ENCODE measurements at regions of chr17 and their contacts with region 1.

Region 1: GRCh38 chr17:18183334-18184142 is at the start of gene ALKBH5:
- DNase-seq: peak; percentile 97
- ATAC-seq: peak; percentile 88
- H3K4me3 ChIP-seq: peak within 1 kb of the TSS; percentile 83
- H3K27ac ChIP-seq: peak within 1 kb of the TSS; percentile 97
- H3K4me1 ChIP-seq: peaks cover 11% of the 10 kb centered on the region
- H3K27me3 ChIP-seq: no peaks in the 10 kb centered on the region
- CTCF ChIP-seq: peak; percentile 35 to 54 (median 45); a peak in 5 of 6 replicates
- EP300 ChIP-seq: no peak
- POLR2A ChIP-seq: peak; percentile 77
- RAD21 ChIP-seq: no peak
- polyA plus RNA-seq, gene ALKBH5: 13.7 to 31.8 TPM

Region 2: GRCh38 chr17:18141210-18141803 is 42.2 kb before region 1 on chr17:
- CTCF ChIA-PET with region 1: interaction called, 43 read pairs
- POLR2A ChIA-PET with region 1: interaction called, 3 read pairs
- RAD21 ChIA-PET with region 1: interaction called, 28 read pairs
- SMC1A ChIA-PET with region 1: interaction called, 5 read pairs
- in situ Hi-C with region 1: no loop called
- intact Hi-C with region 1: loop called (anchors 2 kb)
- DNase-seq: no peak
- ATAC-seq: peak; percentile 72
- H3K4me3 ChIP-seq: no peak overlapping the region
- H3K27ac ChIP-seq: no peak overlapping the region
- H3K4me1 ChIP-seq: no peaks in the 10 kb centered on the region
- H3K27me3 ChIP-seq: no peaks in the 10 kb centered on the region
- CTCF ChIP-seq: peak; percentile 40 to 69 (median 60)
- EP300 ChIP-seq: no peak
- POLR2A ChIP-seq: no peak
- RAD21 ChIP-seq: peak; percentile 70

Region 3: GRCh38 chr17:18161207-18162145 is 22.1 kb before region 1 on chr17:
- CTCF ChIA-PET with region 1: interaction called, 6 read pairs
- POLR2A ChIA-PET with region 1: interaction called, 23 read pairs
- RAD21 ChIA-PET with region 1: interaction called, 9 read pairs
- SMC1A ChIA-PET with region 1: interaction called, 4 read pairs
- in situ Hi-C with region 1: no loop called
- intact Hi-C with region 1: no loop called
- DNase-seq: peak; percentile 37
- ATAC-seq: peak; percentile 49
- H3K4me3 ChIP-seq: no peak overlapping the region
- H3K27ac ChIP-seq: no peak overlapping the region
- H3K4me1 ChIP-seq: peaks cover 41% of the 10 kb centered on the region
- H3K27me3 ChIP-seq: no peaks in the 10 kb centered on the region
- CTCF ChIP-seq: no peak
- EP300 ChIP-seq: peak in 1 of 2 experiments; percentile 9; a peak in 1 of 4 replicates
- POLR2A ChIP-seq: no peak
- RAD21 ChIP-seq: no peak

Region 4: DNA sequence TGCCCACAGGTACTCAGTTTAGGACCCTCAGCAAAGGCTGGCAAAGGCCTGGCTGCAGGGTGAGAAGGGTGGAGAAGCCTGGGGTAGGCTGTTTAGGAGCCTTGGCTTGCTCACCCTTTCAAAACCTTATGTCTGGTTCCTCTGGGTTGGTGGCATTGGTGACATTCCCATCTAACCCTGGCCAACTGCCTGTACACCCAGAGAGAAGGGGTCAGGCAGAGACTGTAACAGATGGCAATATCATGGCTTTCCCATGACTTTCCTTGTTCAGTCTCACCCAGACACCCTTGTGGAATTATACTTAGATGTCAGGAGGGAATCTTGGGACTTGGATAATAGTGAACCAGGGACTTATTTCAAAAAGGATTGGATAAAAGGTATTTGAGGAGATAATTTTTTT is 23.4 kb after region 1 on chr17:
- CTCF ChIA-PET with region 1: no interaction called
- POLR2A ChIA-PET with region 1: no interaction called
- RAD21 ChIA-PET with region 1: no interaction called
- SMC1A ChIA-PET with region 1: no interaction called
- in situ Hi-C with region 1: no loop called
- intact Hi-C with region 1: no loop called
- DNase-seq: no peak
- ATAC-seq: no peak
- H3K4me3 ChIP-seq: no peak overlapping the region
- H3K27ac ChIP-seq: no peak overlapping the region
- H3K4me1 ChIP-seq: no peaks in the 10 kb centered on the region
- H3K27me3 ChIP-seq: no peaks in the 10 kb centered on the region
- CTCF ChIP-seq: no peak
- EP300 ChIP-seq: no peak
- POLR2A ChIP-seq: no peak
- RAD21 ChIP-seq: no peak

Region 5: DNA sequence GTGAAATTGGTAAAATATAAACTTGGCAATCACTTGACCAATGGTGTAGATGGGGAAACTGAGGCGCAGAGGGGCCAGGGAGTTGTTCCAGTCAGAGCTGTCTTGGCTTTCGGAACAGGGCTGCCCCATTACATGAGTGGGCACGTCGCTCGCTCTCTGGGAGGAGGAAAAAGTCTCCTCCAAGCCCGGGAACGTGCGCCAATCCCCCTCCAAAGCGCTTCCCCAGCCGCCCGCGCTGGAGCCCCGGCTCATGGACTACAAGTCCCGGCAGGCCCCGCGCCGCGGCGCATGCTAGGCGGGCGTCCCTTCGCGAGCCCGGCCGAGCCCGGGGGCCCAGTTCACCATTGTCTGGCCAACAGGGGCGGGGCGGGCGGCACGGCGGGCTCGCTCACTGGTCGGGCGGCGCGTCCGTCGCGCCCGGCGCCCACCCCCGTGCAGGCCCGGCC is 41.6 kb after region 1 on chr17:
- CTCF ChIA-PET with region 1: no interaction called
- POLR2A ChIA-PET with region 1: interaction called, 3 read pairs
- RAD21 ChIA-PET with region 1: no interaction called
- SMC1A ChIA-PET with region 1: interaction called, 3 read pairs
- in situ Hi-C with region 1: no loop called
- intact Hi-C with region 1: loop called (anchors 5 kb)
- DNase-seq: peak; percentile 34
- ATAC-seq: peak; percentile 97
- H3K4me3 ChIP-seq: no peak overlapping the region
- H3K27ac ChIP-seq: no peak overlapping the region
- H3K4me1 ChIP-seq: peaks cover 10% of the 10 kb centered on the region
- H3K27me3 ChIP-seq: no peaks in the 10 kb centered on the region
- CTCF ChIP-seq: no peak
- EP300 ChIP-seq: no peak
- POLR2A ChIP-seq: no peak
- RAD21 ChIP-seq: no peak

Region 6: GRCh38 chr17:18314731-18315561 is 131.4 kb after region 1 on chr17 and contains the starts of genes SMCR8 and TOP3A:
- CTCF ChIA-PET with region 1: no interaction called
- POLR2A ChIA-PET with region 1: no interaction called
- RAD21 ChIA-PET with region 1: no interaction called
- SMC1A ChIA-PET with region 1: no interaction called
- in situ Hi-C with region 1: no loop called
- intact Hi-C with region 1: loop called (anchors 5 kb)
- DNase-seq: peak; percentile 89
- ATAC-seq: peak; percentile 94
- H3K4me3 ChIP-seq: peak within 1 kb of the TSS; percentile 89
- H3K27ac ChIP-seq: peak within 1 kb of the TSS; percentile 84
- H3K4me1 ChIP-seq: peaks cover 22% of the 10 kb centered on the region
- H3K27me3 ChIP-seq: no peaks in the 10 kb centered on the region
- CTCF ChIP-seq: no peak
- EP300 ChIP-seq: no peak
- POLR2A ChIP-seq: peak; percentile 79
- RAD21 ChIP-seq: no peak
- polyA plus RNA-seq, gene SMCR8: 0.52 to 0.77 TPM
- polyA plus RNA-seq, gene TOP3A: 4.2 to 11.5 TPM

Region 7: GRCh38 chr17:18626152-18626870 is 442.8 kb after region 1 on chr17:
- CTCF ChIA-PET with region 1: no interaction called
- POLR2A ChIA-PET with region 1: no interaction called
- RAD21 ChIA-PET with region 1: no interaction called
- SMC1A ChIA-PET with region 1: no interaction called
- in situ Hi-C with region 1: no loop called
- intact Hi-C with region 1: no loop called
- DNase-seq: no peak
- ATAC-seq: no peak
- H3K4me3 ChIP-seq: peak overlapping the region; percentile 54; the same call in 1 of the 2 replicates
- H3K27ac ChIP-seq: no peak overlapping the region
- H3K4me1 ChIP-seq: peaks cover 5% of the 10 kb centered on the region; the same call in 1 of the 2 replicates
- H3K27me3 ChIP-seq: no peaks in the 10 kb centered on the region
- CTCF ChIP-seq: no peak
- EP300 ChIP-seq: no peak
- POLR2A ChIP-seq: no peak
- RAD21 ChIP-seq: no peak